Dorsolateral prefrontal cortex (tissue), 120 donors: ENCODE measurements at regions of chr4 and their contacts with region 1.

Region 1: GRCh38 chr4:83484500-83485461 is at the start of gene ABRAXAS1:
- DNase-seq: peak; percentile 87 to 96 (median 93)
- H3K4me3 ChIP-seq: peak within 1 kb of the TSS; percentile 52 to 94 (median 84)
- H3K27ac ChIP-seq: peak within 1 kb of the TSS; percentile 54 to 95 (median 87)
- H3K27me3 ChIP-seq: no peaks in the 10 kb centered on the region
- CTCF ChIP-seq: peak in 24 of 56 donors; percentile 3 to 39 (median 23)
- total RNA-seq, gene ABRAXAS1: 1.8 to 9.7 (median 4.7) TPM

Region 2: GRCh38 chr4:82984459-82984858 is 500.3 kb before region 1 on chr4:
- intact Hi-C with region 1: no loop called
- DNase-seq: no peak
- H3K4me3 ChIP-seq: no peak overlapping the region
- H3K27ac ChIP-seq: no peak overlapping the region
- H3K27me3 ChIP-seq: no peaks in the 10 kb centered on the region
- CTCF ChIP-seq: no peak

Region 3: GRCh38 chr4:83455281-83456129 is 29.3 kb before region 1 on chr4 and contains the starts of genes HELQ and MRPS18C:
- intact Hi-C with region 1: loop called (anchors 1 to 2 kb)
- DNase-seq: peak; percentile 86 to 97 (median 95)
- H3K4me3 ChIP-seq: peak within 1 kb of the TSS; percentile 61 to 98 (median 88)
- H3K27ac ChIP-seq: peak within 1 kb of the TSS; percentile 73 to 99 (median 95)
- H3K27me3 ChIP-seq: no peaks in the 10 kb centered on the region
- CTCF ChIP-seq: peak in 40 of 56 donors; percentile 3 to 58 (median 26)
- total RNA-seq, gene HELQ: 9.8 to 22.5 (median 15.6) TPM
- total RNA-seq, gene MRPS18C: 27.0 to 71.6 (median 46.6) TPM